ENCODE measurements at regions of chr12 and their contacts with region 1.

Region 1: GRCh38 chr12:117377744-117378143 is 16.3 kb upstream of the NOS1 start:
- DNase-seq: peak in 1 of 3 donors; percentile 2
- ATAC-seq: peak; percentile 53
- H3K4me3 ChIP-seq: no peak overlapping the region
- H3K4me1 ChIP-seq: no peaks in the 10 kb centered on the region
- CTCF ChIP-seq: no peak

Region 2: DNA sequence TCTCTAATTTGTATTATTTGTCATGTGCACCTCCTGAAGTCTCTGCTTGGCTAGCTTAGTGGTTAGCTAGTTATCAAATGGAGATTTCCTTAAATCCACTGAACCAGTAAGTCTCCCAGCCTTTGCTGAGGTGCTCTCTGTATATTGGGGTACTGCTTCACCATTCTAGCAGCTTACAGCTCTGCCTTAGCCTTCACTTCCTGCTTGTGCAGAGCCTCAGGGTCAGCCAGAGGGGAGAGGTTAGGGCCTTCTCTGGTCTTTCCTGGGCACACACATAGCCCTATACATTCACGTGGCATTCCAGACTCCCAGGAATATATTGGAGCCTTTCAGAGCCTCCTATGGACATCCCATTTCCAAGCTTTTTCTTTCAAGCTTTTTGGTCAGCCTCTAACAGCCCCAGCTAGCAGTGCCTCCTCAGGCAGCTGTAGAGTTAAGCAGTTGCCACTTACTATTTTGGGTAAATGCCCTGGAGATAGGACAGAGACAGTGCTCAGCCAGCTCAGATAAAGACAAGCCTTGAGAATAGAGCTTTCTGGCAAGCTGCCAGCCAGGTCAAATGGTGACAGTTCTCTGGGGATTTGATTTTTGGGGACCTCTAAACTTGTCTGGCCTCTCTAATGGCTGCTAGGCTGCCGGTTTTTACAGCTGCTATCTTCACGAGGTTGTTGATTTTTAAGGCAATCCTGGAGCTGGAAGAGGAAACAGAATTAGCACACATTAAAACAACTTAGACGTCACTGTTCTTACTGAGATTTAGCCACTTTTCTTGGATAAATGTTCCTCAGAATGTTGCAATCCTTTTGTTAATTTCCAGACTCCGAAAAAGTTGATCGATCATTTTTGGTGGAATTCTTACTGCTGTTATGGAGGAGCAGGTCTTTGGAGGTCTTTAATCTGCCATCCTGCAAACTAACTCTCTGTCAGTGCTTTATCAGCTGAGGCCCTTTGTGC is 434.0 kb before region 1 on chr12:
- intact Hi-C with region 1: no loop called
- DNase-seq: no peak
- ATAC-seq: no peak
- H3K4me3 ChIP-seq: no peak overlapping the region
- H3K4me1 ChIP-seq: no peaks in the 10 kb centered on the region
- CTCF ChIP-seq: no peak

Region 3: DNA sequence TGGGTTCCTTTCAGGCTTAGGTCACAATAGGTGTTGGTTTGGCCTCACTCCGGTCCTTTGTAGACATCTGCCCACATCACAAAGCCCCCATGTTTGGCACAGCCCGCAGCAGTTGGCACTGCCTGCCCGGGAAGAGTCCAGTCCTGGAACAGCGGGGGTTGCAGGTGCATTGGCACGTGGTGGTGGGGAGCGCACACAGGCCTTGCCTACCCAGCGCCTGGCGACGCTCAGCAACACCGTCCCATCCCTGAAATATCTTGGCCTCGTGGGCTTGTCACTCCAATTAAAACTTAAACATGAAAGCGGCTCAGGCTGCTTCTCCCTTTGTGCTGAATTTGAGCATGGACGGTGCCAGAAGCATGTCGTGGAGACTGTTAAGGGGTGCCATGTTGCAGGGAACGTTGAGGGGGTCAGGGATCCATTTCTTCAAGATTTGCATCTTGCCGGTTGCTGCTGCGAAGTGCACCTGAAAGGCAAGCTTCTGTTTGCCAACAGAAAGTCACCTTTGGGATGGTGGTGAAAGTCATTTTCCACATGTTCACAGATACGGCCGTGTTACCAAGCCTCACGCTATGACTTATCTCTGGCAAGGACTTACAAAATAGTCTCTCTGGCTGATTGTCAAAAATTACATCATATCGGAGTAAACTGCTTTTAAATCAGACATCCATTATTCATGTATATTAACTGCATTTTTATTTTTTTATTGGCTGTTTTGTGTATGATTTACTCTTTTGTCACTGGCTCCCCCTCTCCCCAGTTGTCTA is 375.5 kb before region 1 on chr12:
- intact Hi-C with region 1: no loop called
- DNase-seq: no peak
- ATAC-seq: no peak
- H3K4me3 ChIP-seq: no peak overlapping the region
- H3K4me1 ChIP-seq: no peaks in the 10 kb centered on the region
- CTCF ChIP-seq: no peak

Region 4: GRCh38 chr12:118150625-118151024 is 772.9 kb after region 1 on chr12:
- intact Hi-C with region 1: loop called in 1 of 2 experiments (anchors 10 kb)
- DNase-seq: no peak
- ATAC-seq: no peak
- H3K4me3 ChIP-seq: no peak overlapping the region
- H3K4me1 ChIP-seq: peaks cover 2% of the 10 kb centered on the region
- CTCF ChIP-seq: no peak

Measured in mucosa of descending colon (tissue), 3 donors.